CD4-positive, alpha-beta T cell (primary cell): ENCODE measurements at regions of chr10 and their contacts with region 1.

Region 1: GRCh38 chr10:90862908-90863514 is 5.2 kb upstream of the HTR7 start:
- DNase-seq: peak in 3 of 14 experiments; percentile 13 to 47 (median 45)
- ATAC-seq: peak; percentile 48
- H3K4me3 ChIP-seq: no peak overlapping the region
- H3K4me3 Mint-ChIP-seq: no peak overlapping the region
- H3K27ac ChIP-seq: no peak overlapping the region
- H3K27ac Mint-ChIP-seq: no peak overlapping the region
- H3K4me1 ChIP-seq: peaks cover 5% of the 10 kb centered on the region
- H3K4me1 Mint-ChIP-seq: no peaks in the 10 kb centered on the region
- H3K27me3 ChIP-seq: peaks cover 5 to 27% of the 10 kb centered on the region in 2 experiments
- H3K27me3 Mint-ChIP-seq: peaks cover 88% of the 10 kb centered on the region
- CTCF ChIP-seq: peak; percentile 75

Region 2: DNA sequence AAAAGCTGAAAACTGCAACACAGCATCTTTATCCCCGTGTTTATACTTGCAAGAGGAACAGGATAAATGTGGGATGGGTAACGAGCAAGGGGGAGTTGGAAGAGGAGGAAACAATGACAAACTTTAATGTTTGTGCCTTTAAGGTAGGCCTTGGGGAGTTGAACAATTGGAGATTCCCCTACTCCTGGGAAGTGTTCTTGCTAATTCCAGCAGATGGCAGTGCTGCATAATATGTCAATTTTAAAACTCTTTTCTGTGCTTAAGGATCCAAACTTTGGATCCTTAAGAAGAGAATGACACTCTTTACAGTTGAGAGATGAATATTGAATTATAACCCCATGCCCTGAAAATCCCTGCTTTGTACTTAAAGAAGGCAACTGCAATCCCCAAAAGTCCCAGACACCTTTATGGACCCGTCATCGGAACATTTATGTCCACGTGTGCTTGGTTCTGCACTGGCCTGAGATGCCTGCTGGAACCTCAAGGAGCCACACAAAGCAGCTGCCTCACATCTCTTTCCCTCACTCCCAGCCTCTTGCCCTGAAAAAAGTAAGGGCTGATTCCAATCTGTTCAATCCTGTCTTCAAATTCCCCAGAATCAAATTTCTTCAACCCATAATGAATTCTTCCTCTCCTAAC is 1436.7 kb before region 1 on chr10:
- CTCF ChIA-PET with region 1: no interaction called
- POLR2A ChIA-PET with region 1: no interaction called
- intact Hi-C with region 1: loop called (anchors 5 to 10 kb)
- DNase-seq: peak in 4 of 14 experiments; percentile 15 to 62 (median 52)
- ATAC-seq: peak; percentile 71
- H3K4me3 ChIP-seq: no peak overlapping the region
- H3K4me3 Mint-ChIP-seq: no peak overlapping the region
- H3K27ac ChIP-seq: no peak overlapping the region
- H3K27ac Mint-ChIP-seq: no peak overlapping the region
- H3K4me1 ChIP-seq: no peaks in the 10 kb centered on the region
- H3K4me1 Mint-ChIP-seq: peaks cover 6% of the 10 kb centered on the region
- H3K27me3 ChIP-seq: peaks cover 0 to 6% of the 10 kb centered on the region in 2 experiments
- H3K27me3 Mint-ChIP-seq: no peaks in the 10 kb centered on the region
- CTCF ChIP-seq: peak; percentile 72

Region 3: GRCh38 chr10:89793649-89794254 is 1069.3 kb before region 1 on chr10:
- CTCF ChIA-PET with region 1: no interaction called
- POLR2A ChIA-PET with region 1: no interaction called
- intact Hi-C with region 1: loop called (anchors 1 to 2 kb)
- DNase-seq: peak in 8 of 14 experiments; percentile 5 to 77 (median 27)
- ATAC-seq: peak; percentile 52
- H3K4me3 ChIP-seq: no peak overlapping the region
- H3K4me3 Mint-ChIP-seq: no peak overlapping the region
- H3K27ac ChIP-seq: no peak overlapping the region
- H3K27ac Mint-ChIP-seq: no peak overlapping the region
- H3K4me1 ChIP-seq: no peaks in the 10 kb centered on the region
- H3K4me1 Mint-ChIP-seq: no peaks in the 10 kb centered on the region
- H3K27me3 ChIP-seq: peaks cover 0 to 4% of the 10 kb centered on the region in 2 experiments
- H3K27me3 Mint-ChIP-seq: peaks cover 22% of the 10 kb centered on the region
- CTCF ChIP-seq: peak; percentile 85

Region 4: GRCh38 chr10:90751107-90751997 is 111.7 kb before region 1 on chr10:
- CTCF ChIA-PET with region 1: interaction called, 4 read pairs
- POLR2A ChIA-PET with region 1: no interaction called
- intact Hi-C with region 1: loop called (anchors 1 to 2 kb)
- DNase-seq: peak in 13 of 14 experiments; percentile 4 to 63 (median 20)
- ATAC-seq: no peak
- H3K4me3 ChIP-seq: no peak overlapping the region
- H3K4me3 Mint-ChIP-seq: no peak overlapping the region
- H3K27ac ChIP-seq: no peak overlapping the region
- H3K27ac Mint-ChIP-seq: no peak overlapping the region
- H3K4me1 ChIP-seq: no peaks in the 10 kb centered on the region
- H3K4me1 Mint-ChIP-seq: no peaks in the 10 kb centered on the region
- H3K27me3 ChIP-seq: peaks cover 5 to 17% of the 10 kb centered on the region in 2 experiments
- H3K27me3 Mint-ChIP-seq: peaks cover 47% of the 10 kb centered on the region
- CTCF ChIP-seq: peak; percentile 60

Region 5: DNA sequence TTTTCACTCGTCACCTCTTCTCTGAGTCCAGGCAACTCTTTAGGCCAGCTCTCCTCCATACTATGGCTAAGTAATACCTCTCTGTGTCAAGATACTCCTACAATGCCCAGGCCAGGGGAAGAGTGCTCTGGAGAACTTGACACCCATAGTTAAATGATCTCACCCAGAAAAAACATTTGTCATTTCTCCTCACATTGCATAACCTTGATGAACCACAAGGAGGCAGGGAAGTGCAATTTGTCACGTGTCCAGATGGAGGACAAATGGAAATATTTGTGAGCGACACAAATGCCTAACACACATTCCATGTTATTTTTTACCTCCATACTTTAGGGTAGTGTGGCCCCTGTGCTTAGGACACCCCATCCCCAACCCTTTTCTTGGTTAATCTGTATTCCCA is 83.5 kb before region 1 on chr10:
- CTCF ChIA-PET with region 1: no interaction called
- POLR2A ChIA-PET with region 1: no interaction called
- intact Hi-C with region 1: no loop called
- DNase-seq: no peak
- ATAC-seq: no peak
- H3K4me3 ChIP-seq: no peak overlapping the region
- H3K4me3 Mint-ChIP-seq: no peak overlapping the region
- H3K27ac ChIP-seq: no peak overlapping the region
- H3K27ac Mint-ChIP-seq: no peak overlapping the region
- H3K4me1 ChIP-seq: no peaks in the 10 kb centered on the region
- H3K4me1 Mint-ChIP-seq: no peaks in the 10 kb centered on the region
- H3K27me3 ChIP-seq: no peaks in the 10 kb centered on the region
- H3K27me3 Mint-ChIP-seq: peaks cover 16% of the 10 kb centered on the region
- CTCF ChIP-seq: no peak

Region 6: DNA sequence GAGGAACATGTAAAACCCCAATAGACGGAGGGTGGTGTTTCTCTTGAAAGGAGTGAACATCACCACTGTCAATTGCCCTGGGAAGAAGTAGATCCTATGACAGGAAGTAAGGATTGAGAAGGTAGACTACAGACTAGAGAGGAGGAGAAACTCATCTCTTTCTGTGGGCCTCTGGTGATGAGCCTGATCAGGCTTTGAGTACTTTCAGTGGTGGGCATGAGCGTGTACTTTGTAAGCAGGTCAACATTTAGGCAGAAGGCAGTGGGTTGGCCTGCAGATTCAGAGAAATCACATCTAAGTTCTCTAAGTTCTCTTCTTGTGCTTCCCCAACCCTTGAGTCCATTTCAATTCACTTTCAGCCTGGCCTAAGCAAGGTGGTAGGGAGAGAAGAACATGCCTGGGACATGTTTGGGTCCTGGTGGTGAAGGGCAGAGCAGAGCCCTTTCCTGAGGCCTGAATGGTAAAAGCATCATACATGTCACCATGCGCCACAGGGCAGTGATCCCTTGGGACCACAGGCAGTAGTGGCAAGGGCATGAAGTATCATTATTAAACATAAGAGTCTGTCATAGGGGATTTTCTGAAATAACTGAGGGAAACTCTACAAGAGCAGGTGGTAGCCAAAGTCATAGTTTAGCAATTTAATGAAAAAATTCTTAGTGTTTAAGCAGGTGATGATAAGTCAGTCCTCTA is 114.3 kb after region 1 on chr10:
- CTCF ChIA-PET with region 1: no interaction called
- POLR2A ChIA-PET with region 1: no interaction called
- intact Hi-C with region 1: no loop called
- DNase-seq: no peak
- ATAC-seq: no peak
- H3K4me3 ChIP-seq: no peak overlapping the region
- H3K4me3 Mint-ChIP-seq: no peak overlapping the region
- H3K27ac ChIP-seq: no peak overlapping the region
- H3K27ac Mint-ChIP-seq: no peak overlapping the region
- H3K4me1 ChIP-seq: no peaks in the 10 kb centered on the region
- H3K4me1 Mint-ChIP-seq: no peaks in the 10 kb centered on the region
- H3K27me3 ChIP-seq: no peaks in the 10 kb centered on the region
- H3K27me3 Mint-ChIP-seq: peaks cover 5% of the 10 kb centered on the region
- CTCF ChIP-seq: no peak

Region 7: GRCh38 chr10:91313796-91314485 is 450.9 kb after region 1 on chr10:
- CTCF ChIA-PET with region 1: no interaction called
- POLR2A ChIA-PET with region 1: no interaction called
- intact Hi-C with region 1: no loop called
- DNase-seq: no peak
- ATAC-seq: peak; percentile 52
- H3K4me3 ChIP-seq: no peak overlapping the region
- H3K4me3 Mint-ChIP-seq: no peak overlapping the region
- H3K27ac ChIP-seq: no peak overlapping the region
- H3K27ac Mint-ChIP-seq: no peak overlapping the region
- H3K4me1 ChIP-seq: no peaks in the 10 kb centered on the region
- H3K4me1 Mint-ChIP-seq: peaks cover 6% of the 10 kb centered on the region
- H3K27me3 ChIP-seq: peaks cover 0 to 3% of the 10 kb centered on the region in 2 experiments
- H3K27me3 Mint-ChIP-seq: peaks cover 21% of the 10 kb centered on the region
- CTCF ChIP-seq: no peak